Activated CD8-positive, alpha-beta T cell treated with anti-CD3 and anti-CD28 coated beads for 36 hours (primary cell): ENCODE measurements at regions of chr18 and their contacts with region 1.

Region 1: GRCh38 chr18:11518788-11519685 is 90.4 kb upstream of the SLC35G4 start:
- DNase-seq: peak; percentile 69
- ATAC-seq: peak; percentile 61
- H3K4me3 Mint-ChIP-seq: no peak overlapping the region
- H3K27ac Mint-ChIP-seq: no peak overlapping the region
- H3K4me1 Mint-ChIP-seq: no peaks in the 10 kb centered on the region
- H3K27me3 Mint-ChIP-seq: no peaks in the 10 kb centered on the region
- CTCF ChIP-seq: peak; percentile 70

Region 2: DNA sequence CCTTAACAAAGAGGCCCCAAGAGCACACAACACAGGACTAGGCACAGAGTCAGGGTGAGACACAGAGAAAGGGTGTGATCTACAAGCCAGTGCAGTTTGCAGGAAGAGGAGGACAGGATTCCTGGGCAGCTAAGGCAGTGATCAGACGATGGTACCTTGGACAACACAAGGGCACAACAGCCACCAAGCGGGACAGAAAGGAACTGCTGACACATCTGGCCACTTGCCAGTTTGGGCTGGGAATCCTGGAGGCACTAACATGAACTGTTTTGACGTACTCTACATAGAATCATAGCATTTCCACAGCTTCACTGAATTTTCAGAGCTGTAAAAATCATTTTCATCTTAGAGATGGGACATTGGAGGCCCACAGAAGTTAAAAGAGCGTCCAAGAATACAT is 131.2 kb before region 1 on chr18:
- CTCF ChIA-PET with region 1: no interaction called
- POLR2A ChIA-PET with region 1: no interaction called
- intact Hi-C with region 1: no loop called
- DNase-seq: peak; percentile 6
- ATAC-seq: no peak
- H3K4me3 Mint-ChIP-seq: no peak overlapping the region
- H3K27ac Mint-ChIP-seq: no peak overlapping the region
- H3K4me1 Mint-ChIP-seq: no peaks in the 10 kb centered on the region
- H3K27me3 Mint-ChIP-seq: no peaks in the 10 kb centered on the region
- CTCF ChIP-seq: no peak

Region 3: GRCh38 chr18:11454021-11454420 is 65.0 kb before region 1 on chr18:
- CTCF ChIA-PET with region 1: no interaction called
- POLR2A ChIA-PET with region 1: no interaction called
- intact Hi-C with region 1: loop called (anchors 10 kb)
- DNase-seq: no peak
- ATAC-seq: no peak
- H3K4me3 Mint-ChIP-seq: no peak overlapping the region
- H3K27ac Mint-ChIP-seq: no peak overlapping the region
- H3K4me1 Mint-ChIP-seq: no peaks in the 10 kb centered on the region
- H3K27me3 Mint-ChIP-seq: no peaks in the 10 kb centered on the region
- CTCF ChIP-seq: no peak

Region 4: DNA sequence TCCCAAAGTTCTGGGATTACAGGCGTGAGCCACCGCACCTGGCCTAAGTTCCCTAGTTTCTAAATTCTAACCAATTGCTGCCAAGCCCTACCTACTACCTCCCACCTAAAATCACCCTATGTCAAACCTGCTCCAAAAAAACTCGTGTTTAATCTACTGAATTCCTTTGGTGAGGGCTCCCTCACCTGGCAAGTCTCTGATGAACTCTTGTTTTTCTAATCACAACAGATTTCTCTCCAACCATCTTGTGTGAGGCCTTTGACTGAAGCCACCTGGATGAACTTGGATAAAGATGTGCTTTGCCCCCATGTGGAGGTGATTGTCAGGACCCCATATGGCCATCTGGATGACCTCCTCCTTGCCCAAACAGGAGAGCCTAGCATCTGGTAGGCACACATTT is 72.9 kb after region 1 on chr18:
- CTCF ChIA-PET with region 1: no interaction called
- POLR2A ChIA-PET with region 1: no interaction called
- intact Hi-C with region 1: no loop called
- DNase-seq: no peak
- ATAC-seq: no peak
- H3K4me3 Mint-ChIP-seq: no peak overlapping the region
- H3K27ac Mint-ChIP-seq: no peak overlapping the region
- H3K4me1 Mint-ChIP-seq: peaks cover 12% of the 10 kb centered on the region
- H3K27me3 Mint-ChIP-seq: peaks cover 9% of the 10 kb centered on the region
- CTCF ChIP-seq: no peak